Activated CD4-positive, alpha-beta memory T cell treated with anti-CD3 and anti-CD28 coated beads for 36 hours (primary cell): ENCODE measurements at regions of chr10 and their contacts with region 1.

Region 1: GRCh38 chr10:109784236-109784635 is 139.1 kb downstream of the XPNPEP1 start:
- DNase-seq: no peak
- H3K4me3 Mint-ChIP-seq: no peak overlapping the region
- H3K27ac Mint-ChIP-seq: no peak overlapping the region
- H3K4me1 Mint-ChIP-seq: no peaks in the 10 kb centered on the region
- H3K27me3 Mint-ChIP-seq: peaks cover 10% of the 10 kb centered on the region

Region 2: GRCh38 chr10:109773288-109774120 is 10.7 kb before region 1 on chr10:
- CTCF ChIA-PET with region 1: interaction called, 15 read pairs
- POLR2A ChIA-PET with region 1: no interaction called
- intact Hi-C with region 1: no loop called
- DNase-seq: no peak
- H3K4me3 Mint-ChIP-seq: no peak overlapping the region
- H3K27ac Mint-ChIP-seq: no peak overlapping the region
- H3K4me1 Mint-ChIP-seq: no peaks in the 10 kb centered on the region
- H3K27me3 Mint-ChIP-seq: no peaks in the 10 kb centered on the region